Activated B cell treated with CpG ODN at 0.5 μM for 24 hours (primary cell): ENCODE measurements at regions of chr19 and their contacts with region 1.

Region 1: DNA sequence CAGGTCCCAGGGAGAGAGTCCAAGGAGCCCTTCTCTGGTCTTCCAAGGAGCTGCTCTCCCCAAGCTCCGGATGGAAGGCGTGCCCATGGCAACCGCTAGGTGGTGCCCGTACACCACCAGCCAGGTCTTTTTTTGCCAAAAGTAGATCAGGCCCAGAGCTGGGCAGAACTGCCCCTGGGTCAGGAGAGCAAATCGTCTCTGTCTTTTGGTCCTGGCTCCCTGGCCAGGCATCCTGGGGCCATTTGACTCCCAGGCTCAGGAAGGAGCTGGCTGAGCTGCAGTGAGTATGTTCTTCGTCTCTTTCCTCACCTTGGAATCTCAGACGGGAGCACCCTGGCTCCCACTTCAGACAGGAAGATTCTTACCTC is 24.6 kb upstream of the BCL3 start:
- DNase-seq: peak; percentile 76
- ATAC-seq: peak; percentile 92
- H3K4me3 Mint-ChIP-seq: no peak overlapping the region
- H3K27ac Mint-ChIP-seq: no peak overlapping the region
- H3K4me1 Mint-ChIP-seq: peaks cover 40% of the 10 kb centered on the region
- H3K27me3 Mint-ChIP-seq: peaks cover 3% of the 10 kb centered on the region
- CTCF ChIP-seq: peak; percentile 81

Region 2: DNA sequence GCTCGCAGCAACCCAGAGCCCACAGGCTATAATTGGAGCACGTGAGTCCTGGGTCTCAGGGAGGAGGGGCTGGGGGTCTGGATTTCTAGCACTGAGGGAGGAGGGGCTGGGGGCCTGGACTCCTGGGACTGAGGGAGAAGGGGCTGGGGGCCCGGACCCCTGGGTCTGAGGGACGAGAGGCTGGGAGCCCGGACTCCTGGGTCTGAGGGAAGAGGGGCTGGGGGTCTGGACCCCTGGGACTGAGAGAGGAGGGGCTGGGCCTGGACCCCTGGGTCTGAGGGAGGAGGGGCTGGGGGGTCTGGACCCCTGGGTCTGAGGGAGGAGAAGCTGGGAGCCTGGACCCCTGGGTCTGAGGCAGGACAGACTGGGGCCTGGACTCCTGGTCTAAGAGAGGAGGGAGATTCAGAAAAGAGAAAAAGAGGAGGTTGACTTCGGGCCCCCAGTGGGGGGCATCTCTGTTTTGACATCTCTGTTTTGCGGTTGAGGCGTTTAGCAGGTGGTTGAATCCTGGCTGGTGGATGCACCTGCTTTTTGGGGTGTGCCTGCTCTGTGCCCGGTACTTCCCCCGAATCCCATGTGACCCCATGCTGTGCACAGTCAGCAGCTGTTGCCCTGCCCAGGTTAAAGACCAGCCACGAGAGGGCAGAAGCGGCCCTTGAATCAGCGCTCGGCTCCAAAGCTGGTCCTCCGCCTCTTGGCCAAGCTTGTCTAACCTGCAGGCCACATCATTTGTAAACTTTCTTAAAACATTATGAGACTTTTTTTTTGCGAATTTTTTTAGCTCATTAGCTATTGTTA is 69.8 kb before region 1 on chr19:
- CTCF ChIA-PET with region 1: interaction called, 15 read pairs
- POLR2A ChIA-PET with region 1: no interaction called
- intact Hi-C with region 1: loop called (anchors 1 kb)
- DNase-seq: peak; percentile 62
- ATAC-seq: peak; percentile 94
- H3K4me3 Mint-ChIP-seq: no peak overlapping the region
- H3K27ac Mint-ChIP-seq: peak overlapping the region; percentile 53
- H3K4me1 Mint-ChIP-seq: peaks cover 21% of the 10 kb centered on the region
- H3K27me3 Mint-ChIP-seq: no peaks in the 10 kb centered on the region
- CTCF ChIP-seq: no peak

Region 3: DNA sequence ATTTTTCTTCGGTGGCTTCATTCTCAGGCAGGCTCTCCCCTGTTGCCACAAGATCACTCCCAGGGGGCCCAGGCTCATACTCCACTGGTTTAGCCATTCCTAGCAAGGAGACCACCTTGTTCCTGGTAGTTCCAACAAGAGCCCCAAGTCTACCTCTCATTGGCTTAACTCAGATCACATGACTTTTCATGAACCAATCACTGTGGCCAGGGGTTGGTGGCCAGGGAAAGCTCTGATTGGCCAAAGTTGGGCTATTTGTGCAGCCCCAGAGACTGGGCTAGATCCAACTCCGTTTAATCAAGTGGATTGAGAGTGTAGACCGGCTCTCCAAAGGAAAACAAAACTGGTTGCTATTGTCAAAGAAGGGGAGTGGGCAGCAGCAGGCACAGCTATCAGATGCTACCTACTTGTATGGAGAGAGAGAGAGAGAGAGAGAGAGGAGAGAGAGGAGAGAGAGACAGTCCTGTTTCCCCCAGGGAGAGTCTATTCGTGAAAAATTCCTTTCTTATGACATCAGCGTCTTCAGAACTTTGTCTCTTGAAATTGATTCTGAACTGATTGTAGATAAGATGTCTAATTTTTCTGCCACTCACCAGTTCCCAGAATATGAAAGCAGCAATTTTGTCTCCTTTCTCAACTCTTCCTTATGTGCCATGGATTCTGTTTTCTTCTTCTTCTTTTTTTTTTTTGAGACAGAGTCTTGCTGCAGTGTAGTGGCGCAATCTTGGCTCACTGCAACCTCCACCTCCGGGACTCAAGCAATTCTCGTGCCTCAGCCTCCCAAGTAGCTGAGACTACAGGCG is 46.7 kb before region 1 on chr19:
- CTCF ChIA-PET with region 1: no interaction called
- POLR2A ChIA-PET with region 1: no interaction called
- intact Hi-C with region 1: no loop called
- DNase-seq: no peak
- ATAC-seq: no peak
- H3K4me3 Mint-ChIP-seq: no peak overlapping the region
- H3K27ac Mint-ChIP-seq: no peak overlapping the region
- H3K4me1 Mint-ChIP-seq: no peaks in the 10 kb centered on the region
- H3K27me3 Mint-ChIP-seq: peaks cover 6% of the 10 kb centered on the region
- CTCF ChIP-seq: no peak

Region 4: GRCh38 chr19:44734986-44735385 is 11.1 kb after region 1 on chr19:
- CTCF ChIA-PET with region 1: interaction called, 16 read pairs
- POLR2A ChIA-PET with region 1: interaction called, 3 read pairs
- intact Hi-C with region 1: no loop called
- DNase-seq: no peak
- ATAC-seq: no peak
- H3K4me3 Mint-ChIP-seq: no peak overlapping the region
- H3K27ac Mint-ChIP-seq: no peak overlapping the region
- H3K4me1 Mint-ChIP-seq: peaks cover 8% of the 10 kb centered on the region
- H3K27me3 Mint-ChIP-seq: peaks cover 2% of the 10 kb centered on the region
- CTCF ChIP-seq: no peak

Region 5: DNA sequence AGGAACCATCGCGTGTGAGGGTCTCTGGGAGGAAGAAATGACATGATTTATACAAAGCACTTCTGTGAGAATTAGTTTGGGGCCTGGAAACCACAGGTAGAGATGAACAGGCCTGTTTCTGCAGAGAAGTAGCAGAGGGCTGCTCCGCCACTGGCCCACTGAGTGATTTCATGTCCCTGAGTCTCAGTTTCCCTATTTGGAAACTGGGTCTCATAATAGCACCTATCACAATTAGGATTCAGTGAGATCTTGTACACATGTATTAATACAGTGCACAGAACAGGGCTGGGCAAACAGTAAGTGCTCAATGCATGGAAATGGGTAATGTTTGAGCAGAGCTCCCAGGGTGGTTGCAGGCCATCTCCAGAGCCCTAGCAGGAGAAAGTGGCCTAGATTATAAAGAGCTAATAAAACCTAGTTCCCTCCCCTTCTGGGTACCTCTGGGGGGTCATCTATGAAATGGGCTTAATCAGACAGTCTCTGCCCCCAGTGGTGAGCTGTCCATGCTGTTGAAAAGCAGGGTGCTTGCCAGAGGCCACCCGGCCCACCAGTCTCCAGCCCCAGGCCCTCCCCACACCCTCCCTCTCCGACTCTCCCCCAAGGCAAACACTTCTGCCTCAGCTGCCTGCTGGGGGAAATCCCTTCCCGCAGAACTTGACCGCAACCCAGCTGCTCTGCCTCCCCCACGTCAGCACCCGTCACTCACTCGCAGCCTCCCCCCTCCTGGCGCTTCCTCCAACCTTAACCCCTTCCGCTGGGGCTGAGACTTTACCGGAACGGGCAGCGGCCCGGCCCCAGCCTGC is 29.1 kb after region 1 on chr19:
- CTCF ChIA-PET with region 1: interaction called, 29 read pairs
- POLR2A ChIA-PET with region 1: interaction called, 52 read pairs
- intact Hi-C with region 1: loop called (anchors 1 kb)
- DNase-seq: peak; percentile 87
- ATAC-seq: peak; percentile 76
- H3K4me3 Mint-ChIP-seq: peak overlapping the region; percentile 95
- H3K27ac Mint-ChIP-seq: peak overlapping the region; percentile 96
- H3K4me1 Mint-ChIP-seq: peaks cover 68% of the 10 kb centered on the region
- H3K27me3 Mint-ChIP-seq: no peaks in the 10 kb centered on the region
- CTCF ChIP-seq: no peak

Region 6: DNA sequence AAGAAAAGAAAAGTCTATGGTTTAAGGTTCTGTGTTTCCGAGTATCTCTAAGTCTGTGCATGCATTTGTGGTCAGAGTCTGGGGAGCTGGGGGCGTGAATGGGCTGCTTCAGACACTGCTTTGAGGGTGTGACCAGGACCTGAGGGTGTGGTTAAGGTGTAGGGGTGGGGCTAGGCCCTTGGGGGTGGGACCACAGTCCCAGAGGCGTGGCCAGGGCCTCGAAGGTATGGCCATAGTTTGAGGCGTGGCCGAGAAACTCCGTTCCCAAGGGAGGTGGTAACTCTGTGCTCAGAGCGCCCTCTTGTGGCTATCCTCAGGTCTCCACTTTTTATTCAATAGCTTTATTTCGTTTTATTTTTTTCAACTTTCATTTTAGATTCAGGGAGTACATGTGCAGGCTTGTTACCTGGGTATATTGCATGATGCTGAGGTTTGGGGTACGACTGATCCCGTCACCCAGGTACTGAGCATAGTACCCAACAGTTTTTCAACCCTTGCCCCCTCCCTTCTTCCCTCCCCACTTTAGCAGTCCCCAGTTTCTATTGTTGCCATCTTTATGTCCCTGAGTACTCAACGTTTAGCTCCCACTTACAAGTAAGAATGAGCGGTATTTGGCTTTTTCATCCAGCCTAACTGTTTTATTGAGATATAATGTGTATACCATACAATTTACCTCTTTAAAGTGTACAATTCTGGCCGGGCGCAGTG is 46.8 kb after region 1 on chr19:
- CTCF ChIA-PET with region 1: interaction called, 359 read pairs
- POLR2A ChIA-PET with region 1: interaction called, 89 read pairs
- intact Hi-C with region 1: loop called (anchors 1 kb)
- DNase-seq: peak; percentile 97
- ATAC-seq: peak; percentile 100
- H3K4me3 Mint-ChIP-seq: peak overlapping the region; percentile 73
- H3K27ac Mint-ChIP-seq: peak overlapping the region; percentile 86
- H3K4me1 Mint-ChIP-seq: peaks cover 30% of the 10 kb centered on the region
- H3K27me3 Mint-ChIP-seq: no peaks in the 10 kb centered on the region
- CTCF ChIP-seq: no peak

Region 7: GRCh38 chr19:44808463-44809371 is 84.8 kb after region 1 on chr19 and contains the start of gene BCAM:
- CTCF ChIA-PET with region 1: interaction called, 13 read pairs
- POLR2A ChIA-PET with region 1: no interaction called
- intact Hi-C with region 1: no loop called
- DNase-seq: no peak
- ATAC-seq: peak; percentile 31
- H3K4me3 Mint-ChIP-seq: peak within 1 kb of the TSS; percentile 38
- H3K27ac Mint-ChIP-seq: no peak within 1 kb of the TSS
- H3K4me1 Mint-ChIP-seq: peaks cover 4% of the 10 kb centered on the region
- H3K27me3 Mint-ChIP-seq: peaks cover 27% of the 10 kb centered on the region
- CTCF ChIP-seq: no peak
- total RNA-seq, gene BCAM: not detected in 2 replicates

Region 8: GRCh38 chr19:44903602-44904425 is 179.9 kb after region 1 on chr19:
- CTCF ChIA-PET with region 1: no interaction called
- POLR2A ChIA-PET with region 1: no interaction called
- intact Hi-C with region 1: loop called (anchors 2 kb)
- DNase-seq: peak; percentile 78
- ATAC-seq: peak; percentile 68
- H3K4me3 Mint-ChIP-seq: no peak overlapping the region
- H3K27ac Mint-ChIP-seq: no peak overlapping the region
- H3K4me1 Mint-ChIP-seq: peaks cover 18% of the 10 kb centered on the region
- H3K27me3 Mint-ChIP-seq: peaks cover 15% of the 10 kb centered on the region
- CTCF ChIP-seq: peak; percentile 96